ENCODE measurements at regions of chr1 and their contacts with region 1.

Region 1: GRCh38 chr1:238252033-238252802 is 361.5 kb upstream of the ZP4 start:
- DNase-seq: peak; percentile 41
- H3K4me3 ChIP-seq: no peak overlapping the region
- H3K27ac ChIP-seq: no peak overlapping the region
- H3K4me1 ChIP-seq: no peaks in the 10 kb centered on the region
- H3K27me3 ChIP-seq: no peaks in the 10 kb centered on the region
- CTCF ChIP-seq: peak; percentile 48

Region 2: DNA sequence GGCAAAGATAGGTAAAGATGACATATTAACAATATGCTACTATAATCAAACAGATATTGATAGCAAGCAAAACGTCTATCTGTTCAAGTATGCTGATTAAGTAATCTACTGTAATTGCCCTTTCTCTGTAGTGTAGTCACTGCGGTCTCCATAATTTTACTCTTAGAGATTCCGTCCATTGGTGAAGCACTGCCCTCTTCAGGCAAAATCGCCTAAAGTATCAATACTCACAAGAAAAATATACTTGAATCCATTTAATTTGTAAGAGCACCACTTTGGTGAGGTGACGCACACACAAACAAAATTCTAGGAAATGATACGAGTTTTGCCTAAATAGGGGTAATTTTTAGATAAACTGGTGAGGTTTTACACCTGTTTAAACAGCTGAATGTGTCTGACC is 699.6 kb after region 1 on chr1:
- CTCF ChIA-PET with region 1: no interaction called
- POLR2A ChIA-PET with region 1: no interaction called
- intact Hi-C with region 1: loop called (anchors 5 kb)
- DNase-seq: peak; percentile 20
- H3K4me3 ChIP-seq: no peak overlapping the region
- H3K27ac ChIP-seq: no peak overlapping the region
- H3K4me1 ChIP-seq: no peaks in the 10 kb centered on the region
- H3K27me3 ChIP-seq: no peaks in the 10 kb centered on the region
- CTCF ChIP-seq: peak; percentile 31; the same call in 1 of the 2 replicates

Region 3: DNA sequence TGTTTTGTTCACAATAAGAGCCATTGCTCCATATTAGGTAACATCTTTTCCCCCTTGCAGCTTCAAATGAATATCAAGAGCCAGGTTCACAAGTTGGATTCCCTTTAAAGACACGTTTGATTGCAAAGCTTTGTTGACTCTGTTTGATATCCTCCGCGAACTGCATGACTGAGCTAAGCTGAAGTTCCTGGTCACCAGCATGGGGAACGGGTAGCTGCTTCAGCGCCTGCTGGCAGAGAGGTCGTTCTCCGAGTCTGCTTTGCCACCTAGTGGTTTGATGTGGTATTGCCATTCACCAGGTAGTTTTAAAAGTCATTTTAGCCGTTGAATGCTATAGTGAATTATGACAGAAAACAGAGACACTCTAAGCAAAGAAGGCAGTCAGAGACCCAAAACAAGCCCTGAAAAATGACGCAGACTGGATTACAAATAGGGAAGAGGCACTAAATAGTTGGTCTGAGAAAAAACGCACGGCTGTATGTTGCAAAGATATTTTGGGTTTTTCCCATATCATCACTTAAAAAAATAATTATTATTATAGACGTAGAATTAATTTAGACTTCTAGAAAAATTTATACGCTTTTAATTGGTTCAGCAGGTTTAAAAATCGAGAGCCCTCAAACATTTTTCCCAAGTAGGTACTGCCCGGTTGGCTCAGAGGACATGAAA is 1646.0 kb after region 1 on chr1:
- CTCF ChIA-PET with region 1: no interaction called
- POLR2A ChIA-PET with region 1: no interaction called
- intact Hi-C with region 1: loop called (anchors 5 kb)
- DNase-seq: peak; percentile 61
- H3K4me3 ChIP-seq: no peak overlapping the region
- H3K27ac ChIP-seq: no peak overlapping the region
- H3K4me1 ChIP-seq: no peaks in the 10 kb centered on the region
- H3K27me3 ChIP-seq: peaks cover under 1% of the 10 kb centered on the region
- CTCF ChIP-seq: peak; percentile 69

Measured in A673 (cell line).